Heart right ventricle (tissue), 16 donors: ENCODE measurements at regions of chr6 and their contacts with region 1.

Region 1: DNA sequence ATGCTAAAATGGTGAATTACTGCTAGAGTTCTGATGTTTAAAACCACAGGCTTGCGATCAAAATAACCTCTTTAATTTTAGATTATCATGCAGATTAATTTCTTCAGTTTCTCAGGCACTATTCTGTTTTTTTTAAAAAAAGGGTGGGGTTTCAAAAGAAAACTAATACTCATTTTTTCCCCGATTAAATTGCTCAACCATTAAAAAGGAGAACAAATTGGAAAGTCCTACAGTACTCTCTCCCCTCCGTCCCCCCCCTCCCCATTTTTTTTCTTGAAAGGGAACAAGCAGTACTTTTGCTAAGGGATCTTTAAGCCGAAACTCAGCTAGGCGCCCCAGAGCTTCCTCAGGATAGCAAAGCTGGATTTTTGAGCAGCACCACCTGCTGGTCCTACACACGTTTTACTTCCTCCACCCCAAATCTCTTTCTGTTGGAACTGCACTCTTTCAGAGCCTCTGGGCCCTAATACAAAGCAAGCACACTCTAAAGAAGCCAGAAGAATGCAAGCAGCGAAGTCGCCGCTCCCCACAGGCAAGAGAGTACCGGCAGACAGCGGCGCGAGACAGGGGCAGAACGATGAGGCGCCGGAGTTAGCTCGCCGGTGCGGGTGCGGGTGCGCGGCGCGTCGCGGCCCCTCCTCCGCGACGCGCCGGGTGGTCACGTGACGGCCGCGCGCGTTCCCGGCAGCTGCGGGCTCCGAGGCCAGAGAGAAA is at the start of gene RNF146:
- DNase-seq: peak; percentile 81 to 84
- ATAC-seq: peak; percentile 94 to 98 (median 96)
- H3K4me3 ChIP-seq: peak within 1 kb of the TSS; percentile 74 to 97 (median 86)
- H3K27ac ChIP-seq: peak within 1 kb of the TSS; percentile 95 to 100 (median 99)
- H3K4me1 ChIP-seq: peaks cover 0 to 45% (median 40%) of the 10 kb centered on the region in 9 donors
- H3K27me3 ChIP-seq: no peaks in the 10 kb centered on the region
- CTCF ChIP-seq: peak; percentile 53 to 87 (median 69)
- total RNA-seq, gene RNF146: 37.2 to 106 (median 56.5) TPM

Region 2: GRCh38 chr6:127190552-127190951 is 75.8 kb before region 1 on chr6:
- intact Hi-C with region 1: loop called in 2 of 10 experiments (anchors 5 to 10 kb)
- DNase-seq: no peak
- ATAC-seq: no peak
- H3K4me3 ChIP-seq: no peak overlapping the region
- H3K27ac ChIP-seq: peak overlapping the region in 2 of 10 donors; percentile 56 to 65
- H3K4me1 ChIP-seq: peaks cover 0 to 18% (median 0%) of the 10 kb centered on the region in 9 donors
- H3K27me3 ChIP-seq: no peaks in the 10 kb centered on the region
- CTCF ChIP-seq: peak in 7 of 9 donors; percentile 47 to 67 (median 58)

Region 3: GRCh38 chr6:127302728-127303660 is 36.7 kb after region 1 on chr6:
- intact Hi-C with region 1: no loop called
- DNase-seq: peak in 1 of 2 donors; percentile 14
- ATAC-seq: peak in 2 of 8 donors; percentile 39 to 67
- H3K4me3 ChIP-seq: no peak overlapping the region
- H3K27ac ChIP-seq: no peak overlapping the region
- H3K4me1 ChIP-seq: peaks cover 0 to 41% (median 30%) of the 10 kb centered on the region in 9 donors
- H3K27me3 ChIP-seq: no peaks in the 10 kb centered on the region
- CTCF ChIP-seq: peak; percentile 42 to 80 (median 71)

Region 4: DNA sequence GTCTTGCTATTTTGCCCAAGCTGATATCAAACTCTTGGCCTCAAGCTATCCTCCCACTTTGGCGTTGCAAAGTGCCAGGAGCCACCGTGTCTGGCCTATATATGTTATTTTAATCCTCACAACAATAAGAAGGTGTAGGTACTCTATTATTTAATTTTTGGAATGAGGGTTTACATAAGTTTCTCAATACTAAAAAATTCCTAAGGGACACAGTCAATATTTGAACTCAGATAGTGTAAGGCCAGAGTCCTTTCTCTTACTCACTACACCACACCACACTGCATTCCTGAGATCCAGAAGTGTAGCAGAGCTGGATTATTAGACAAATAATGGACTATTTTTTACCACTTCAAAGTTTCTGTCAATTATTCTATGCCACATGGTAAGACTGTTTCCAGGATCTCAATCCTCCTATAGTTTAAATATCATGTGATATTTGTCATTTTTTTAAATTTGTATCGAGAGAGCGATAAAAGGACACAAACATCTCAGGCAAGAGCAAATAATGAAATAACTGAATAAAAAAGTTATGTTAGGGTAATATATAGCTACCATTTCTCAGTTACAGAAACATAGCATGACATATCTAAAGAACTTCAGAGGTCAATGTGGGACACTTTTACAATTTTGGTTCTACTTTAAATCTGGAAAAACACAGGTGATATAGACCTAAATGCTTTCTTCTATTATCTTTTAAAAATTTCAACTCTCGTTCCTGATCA is 796.7 kb after region 1 on chr6:
- intact Hi-C with region 1: loop called in 1 of 10 experiments (anchors 5 kb)
- DNase-seq: no peak
- ATAC-seq: no peak
- H3K4me3 ChIP-seq: no peak overlapping the region
- H3K27ac ChIP-seq: no peak overlapping the region
- H3K4me1 ChIP-seq: peaks cover 0 to 12% (median 5%) of the 10 kb centered on the region in 9 donors
- H3K27me3 ChIP-seq: no peaks in the 10 kb centered on the region
- CTCF ChIP-seq: no peak